Breast epithelium (tissue), 4 donors: ENCODE measurements at regions of chr5 and their contacts with region 1.

Region 1: DNA sequence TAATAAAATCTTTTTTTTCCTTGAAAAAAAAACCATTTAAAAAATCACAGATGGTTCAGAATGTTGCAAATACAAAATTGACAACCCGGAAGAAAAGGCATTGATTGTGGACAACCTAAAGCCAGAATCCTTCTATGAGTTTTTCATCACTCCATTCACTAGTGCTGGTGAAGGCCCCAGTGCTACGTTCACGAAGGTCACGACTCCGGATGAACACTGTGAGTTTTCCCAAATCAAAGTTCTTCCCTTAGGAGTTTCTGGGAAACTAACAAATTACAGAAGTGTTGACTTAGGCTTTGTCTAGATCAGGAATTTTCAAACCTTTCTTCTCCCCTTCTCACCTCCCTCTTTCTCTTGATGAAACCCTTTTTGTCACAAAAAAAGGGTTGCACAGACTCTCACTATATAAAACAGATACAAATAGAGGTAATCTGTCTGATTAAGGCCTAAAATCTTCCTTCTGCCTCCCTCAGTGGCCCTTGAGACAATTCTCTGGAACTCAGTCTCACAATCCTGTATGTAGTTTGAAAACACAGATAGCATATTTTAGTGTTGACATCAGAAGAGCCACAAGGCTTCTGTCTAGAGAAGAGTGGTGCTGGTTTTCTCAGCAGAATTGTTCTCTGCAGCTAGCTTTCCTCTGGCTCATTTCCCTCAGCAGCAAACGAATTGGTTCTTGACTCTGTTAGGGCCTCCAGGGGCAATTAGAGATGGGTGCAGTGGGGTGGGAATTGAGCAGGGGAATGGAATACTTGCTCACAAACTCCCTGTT is 79.5 kb downstream of the OSMR start:
- DNase-seq: no peak
- H3K4me3 ChIP-seq: no peak overlapping the region
- H3K27ac ChIP-seq: peak overlapping the region in 1 of 2 donors; percentile 42
- H3K4me1 ChIP-seq: no peaks in the 10 kb centered on the region
- H3K27me3 ChIP-seq: no peaks in the 10 kb centered on the region
- CTCF ChIP-seq: no peak
- POLR2A ChIP-seq: no peak

Region 2: GRCh38 chr5:38845526-38846378 is 79.6 kb before region 1 on chr5 and contains the start of gene OSMR:
- intact Hi-C with region 1: loop called (anchors 2 kb)
- DNase-seq: peak; percentile 89 to 92
- H3K4me3 ChIP-seq: peak within 1 kb of the TSS; percentile 79 to 99 (median 86)
- H3K27ac ChIP-seq: peak within 1 kb of the TSS; percentile 93 to 98
- H3K4me1 ChIP-seq: no peaks in the 10 kb centered on the region
- H3K27me3 ChIP-seq: no peaks in the 10 kb centered on the region
- CTCF ChIP-seq: peak in 1 of 3 donors; percentile 22
- POLR2A ChIP-seq: peak; percentile 72
- total RNA-seq, gene OSMR: 32.2 to 121 (median 54.0) TPM